ENCODE measurements at regions of chr15 and their contacts with region 1.

Region 1: DNA sequence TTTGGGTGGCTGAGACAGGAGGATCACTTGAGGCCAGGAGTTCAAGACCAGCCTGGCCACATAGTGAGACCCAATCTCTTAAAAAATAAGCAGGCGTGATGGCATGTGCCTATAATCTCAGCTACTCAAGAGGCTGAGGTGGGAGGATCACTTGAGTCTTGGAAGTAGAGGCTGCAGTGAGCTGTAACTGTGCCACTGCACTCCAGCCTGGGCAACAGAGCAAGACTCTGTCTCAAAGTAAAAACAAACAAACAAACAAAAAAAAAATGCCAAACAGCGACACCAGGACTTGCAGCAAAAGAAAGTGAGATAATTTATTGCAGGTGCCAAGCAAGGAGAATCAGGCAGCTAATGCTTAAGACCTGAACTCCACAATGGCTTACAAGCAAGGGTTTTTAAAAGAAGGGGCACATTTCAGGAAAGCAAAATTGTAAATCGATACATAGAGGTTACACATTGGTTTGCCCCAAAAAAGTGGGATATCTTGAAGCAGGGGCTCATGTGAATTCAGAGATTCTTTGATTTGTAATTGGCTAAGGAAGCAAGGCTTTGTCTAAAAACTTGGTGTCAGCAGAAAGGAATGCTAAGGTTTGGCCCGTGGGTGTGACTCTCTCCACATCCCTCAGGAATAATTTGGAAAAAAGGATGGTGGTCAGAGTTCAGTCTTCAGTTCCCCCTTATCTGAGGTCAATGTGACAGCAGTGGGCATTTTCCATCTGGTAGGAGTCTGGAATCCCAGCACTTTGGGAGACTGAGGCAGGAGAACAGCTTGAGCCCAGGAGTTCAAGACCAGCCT is 5.2 kb upstream of the MPI start:
- DNase-seq: no peak
- ATAC-seq: no peak
- H3K4me3 ChIP-seq: no peak overlapping the region
- H3K27ac ChIP-seq: no peak overlapping the region
- H3K4me1 ChIP-seq: peaks cover 5% of the 10 kb centered on the region
- H3K27me3 ChIP-seq: no peaks in the 10 kb centered on the region
- CTCF ChIP-seq: no peak

Region 2: DNA sequence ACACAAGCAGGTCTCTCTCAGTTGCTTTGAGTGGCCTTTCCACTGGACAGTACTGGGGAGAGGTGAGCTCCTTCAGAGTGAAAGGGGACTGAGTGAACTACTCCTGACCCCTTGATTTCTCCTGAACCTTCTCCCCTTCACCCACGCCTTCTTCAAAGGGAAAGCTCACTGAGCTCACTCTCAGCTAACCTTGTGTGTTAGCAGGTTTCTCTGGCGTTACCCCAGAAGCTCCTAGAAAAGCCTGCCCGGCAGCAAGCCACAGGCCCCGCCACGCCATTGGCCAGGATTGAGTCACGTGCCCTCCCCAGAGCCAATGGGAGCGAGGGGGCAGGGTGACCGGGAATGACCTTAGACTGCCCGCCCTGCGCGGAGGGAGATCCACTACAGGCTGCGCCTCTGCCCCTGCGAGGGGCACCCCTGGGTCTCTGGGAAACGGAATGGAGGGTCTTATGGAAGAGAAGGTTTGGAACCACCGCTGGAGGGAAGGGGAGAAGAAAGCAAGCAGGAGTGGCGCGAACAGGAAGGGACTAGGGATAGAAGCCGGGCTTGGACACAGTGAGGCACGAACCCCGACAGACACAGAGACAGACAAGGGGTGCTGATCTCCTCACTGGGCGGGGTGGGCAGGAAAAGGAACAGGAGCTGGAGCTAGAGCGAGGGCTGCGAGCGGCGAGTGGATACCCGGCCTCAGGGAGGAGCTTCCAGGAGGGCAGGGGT is 286.3 kb before region 1 on chr15:
- CTCF ChIA-PET with region 1: no interaction called
- POLR2A ChIA-PET with region 1: no interaction called
- in situ Hi-C with region 1: no loop called
- intact Hi-C with region 1: no loop called
- DNase-seq: no peak
- ATAC-seq: peak; percentile 95
- H3K4me3 ChIP-seq: peak overlapping the region; percentile 67 to 77
- H3K27ac ChIP-seq: peak overlapping the region; percentile 92
- H3K4me1 ChIP-seq: peaks cover 16% of the 10 kb centered on the region
- H3K27me3 ChIP-seq: no peaks in the 10 kb centered on the region
- CTCF ChIP-seq: no peak

Region 3: DNA sequence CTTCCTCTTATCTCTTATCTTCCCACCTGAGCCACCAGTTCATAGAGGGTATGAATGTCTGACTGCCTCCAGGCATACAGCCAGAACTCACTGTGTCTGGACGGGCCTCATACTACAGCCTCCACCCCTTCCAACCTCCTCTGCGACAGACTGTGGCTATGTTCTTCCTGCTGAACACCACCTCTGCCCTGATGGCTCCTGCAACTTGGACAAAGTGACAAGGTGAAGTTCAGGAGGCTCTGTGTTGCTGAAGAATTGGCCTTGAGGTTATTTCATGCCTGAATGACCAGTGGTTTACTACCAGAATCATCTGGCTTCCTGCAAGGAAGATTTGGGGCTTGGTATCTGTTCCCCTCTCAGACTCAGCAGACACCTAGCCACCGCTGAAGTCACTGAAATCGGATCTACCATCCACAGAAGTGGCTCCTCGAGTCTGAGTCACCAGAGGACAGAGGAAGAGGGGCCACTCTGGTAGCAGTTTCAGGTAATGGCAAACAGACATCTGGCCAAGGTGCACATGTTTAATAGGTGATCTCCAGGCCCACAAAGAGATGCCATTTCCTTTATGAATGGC is 27.5 kb before region 1 on chr15:
- CTCF ChIA-PET with region 1: interaction called, 12 read pairs
- POLR2A ChIA-PET with region 1: no interaction called
- in situ Hi-C with region 1: no loop called
- intact Hi-C with region 1: no loop called
- DNase-seq: no peak
- ATAC-seq: 0 out of 2 replicates have a peak, but pooled peaks have one; percentile 32
- H3K4me3 ChIP-seq: no peak overlapping the region
- H3K27ac ChIP-seq: no peak overlapping the region
- H3K4me1 ChIP-seq: no peaks in the 10 kb centered on the region
- H3K27me3 ChIP-seq: no peaks in the 10 kb centered on the region
- CTCF ChIP-seq: no peak